HCT116 (cell line): ENCODE measurements at regions of chr14 and their contacts with region 1.

Region 1: DNA sequence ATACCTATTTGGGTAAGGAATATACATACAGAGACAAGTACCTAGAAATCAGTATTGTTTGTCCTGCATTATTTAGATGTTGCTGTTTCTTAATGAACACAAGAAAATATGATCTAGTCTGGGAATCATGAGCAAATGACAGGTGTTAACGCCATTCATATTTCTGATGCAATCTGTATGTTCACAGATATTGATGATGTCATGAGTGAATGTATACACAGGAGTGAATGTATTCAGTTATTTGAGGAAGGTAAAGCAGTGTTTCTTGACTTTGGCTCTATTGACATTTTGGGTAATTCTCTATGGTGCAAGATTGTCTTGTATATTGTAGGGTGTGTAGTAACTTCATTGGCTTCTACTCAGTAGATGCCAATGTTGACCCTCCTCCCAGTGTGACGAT is 26.7 kb upstream of the RTL1 start:
- DNase-seq: no peak
- ATAC-seq: no peak
- H3K4me3 ChIP-seq: no peak overlapping the region
- H3K27ac ChIP-seq: no peak overlapping the region
- H3K4me1 ChIP-seq: no peaks in the 10 kb centered on the region
- H3K27me3 ChIP-seq: no peaks in the 10 kb centered on the region
- CTCF ChIP-seq: no peak
- POLR2A ChIP-seq: no peak
- RAD21 ChIP-seq: no peak

Region 2: DNA sequence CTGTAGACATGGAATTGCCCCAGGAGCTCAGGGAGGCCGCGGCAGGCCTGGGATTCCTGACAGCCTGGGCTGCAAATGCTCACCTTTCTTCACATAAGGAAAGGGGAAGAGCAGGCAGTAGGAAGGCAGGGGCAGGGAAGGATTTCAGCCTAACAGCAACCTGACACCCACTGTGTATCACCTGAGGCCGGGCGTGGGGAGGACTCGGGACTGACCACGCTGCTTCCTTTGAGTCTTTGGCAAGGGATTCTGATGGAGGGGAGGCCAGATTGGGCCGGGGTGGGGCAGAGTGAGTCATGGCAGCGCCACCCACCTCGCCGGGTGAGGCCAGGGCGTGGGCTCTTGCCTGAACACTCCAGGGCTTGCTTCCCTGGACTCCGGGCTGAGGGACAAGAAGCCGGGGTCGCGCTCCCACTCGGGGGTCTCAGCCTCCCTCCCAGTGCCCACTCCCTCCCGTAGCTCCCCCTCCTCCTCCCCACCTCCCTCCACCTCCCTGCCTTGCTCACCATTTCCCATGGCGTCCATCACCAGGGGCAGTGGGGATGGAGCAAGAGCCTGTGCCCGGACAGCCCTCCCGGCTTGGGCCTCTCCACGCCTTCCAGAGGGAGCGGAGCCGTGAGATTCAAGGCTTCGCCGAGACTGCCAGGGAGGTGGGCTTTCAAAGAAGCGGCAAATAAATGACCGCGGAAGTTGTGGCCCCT is 221.1 kb after region 1 on chr14:
- CTCF ChIA-PET with region 1: no interaction called
- POLR2A ChIA-PET with region 1: no interaction called
- RAD21 ChIA-PET with region 1: no interaction called
- intact Hi-C with region 1: loop called (anchors 10 kb)
- DNase-seq: peak; percentile 22
- ATAC-seq: peak; percentile 91
- H3K4me3 ChIP-seq: peak overlapping the region; percentile 27 to 49
- H3K27ac ChIP-seq: peak overlapping the region; percentile 34; the same call in 1 of the 2 replicates
- H3K4me1 ChIP-seq: peaks cover 12 to 29% of the 10 kb centered on the region in 2 experiments
- H3K27me3 ChIP-seq: no peaks in the 10 kb centered on the region
- CTCF ChIP-seq: no peak
- POLR2A ChIP-seq: no peak
- RAD21 ChIP-seq: no peak